ENCODE measurements at regions of chr17 and their contacts with region 1.

Region 1: GRCh38 chr17:38799378-38800236 is at the start of gene PIP4K2B:
- DNase-seq: peak; percentile 92 to 97
- ATAC-seq: peak; percentile 91 to 92
- H3K4me3 ChIP-seq: peak within 1 kb of the TSS; percentile 83 to 96 (median 88)
- H3K27ac ChIP-seq: peak within 1 kb of the TSS; percentile 94 to 100 (median 100)
- H3K4me1 ChIP-seq: peaks cover 34 to 37% of the 10 kb centered on the region in 2 donors
- H3K27me3 ChIP-seq: no peaks in the 10 kb centered on the region
- CTCF ChIP-seq: no peak
- POLR2A ChIP-seq: peak; percentile 47 to 51
- total RNA-seq, gene PIP4K2B: 57.2 to 97.0 (median 76.8) TPM

Region 2: DNA sequence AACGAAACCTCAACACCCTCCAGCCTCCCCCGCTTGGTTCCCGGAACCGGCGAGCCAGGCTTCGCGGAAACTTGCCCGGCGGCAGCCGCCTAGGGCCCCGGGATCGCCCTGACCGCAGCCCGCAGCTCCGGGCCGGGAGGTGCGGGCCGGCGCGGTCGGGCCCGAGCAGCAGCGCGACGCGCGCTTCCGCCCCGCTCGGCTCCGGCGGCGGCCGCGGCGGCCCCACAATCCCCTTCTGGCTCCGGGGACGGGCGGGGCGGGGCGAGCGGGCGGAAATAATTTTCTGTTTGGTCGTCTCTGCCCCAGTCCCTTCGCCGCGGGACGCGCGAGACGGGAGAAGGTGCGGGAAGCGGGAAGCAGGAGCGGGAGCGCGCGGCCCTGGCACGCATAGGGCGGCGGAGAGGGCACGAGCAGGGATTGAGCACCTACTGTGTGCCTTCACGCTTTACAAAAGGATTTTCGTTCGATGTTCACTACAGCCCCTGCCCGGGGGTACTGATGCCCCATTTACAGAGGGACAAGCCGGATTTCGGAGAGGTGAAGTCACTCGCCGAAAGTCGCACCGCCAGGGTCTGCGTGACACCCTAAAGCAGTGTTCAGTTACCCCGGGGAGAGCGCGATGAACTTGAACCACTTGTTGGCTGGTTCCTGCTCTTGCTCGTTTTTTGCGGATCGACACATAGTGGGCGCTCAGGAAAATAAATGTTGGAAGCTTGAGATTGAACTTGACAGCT is 97.3 kb before region 1 on chr17:
- in situ Hi-C with region 1: no loop called
- intact Hi-C with region 1: loop called (anchors 5 kb)
- DNase-seq: peak; percentile 82 to 88
- ATAC-seq: peak; percentile 47 to 50
- H3K4me3 ChIP-seq: peak overlapping the region; percentile 71 to 93 (median 78)
- H3K27ac ChIP-seq: peak overlapping the region; percentile 96 to 100 (median 98)
- H3K4me1 ChIP-seq: peaks cover 20 to 25% of the 10 kb centered on the region in 2 donors
- H3K27me3 ChIP-seq: no peaks in the 10 kb centered on the region
- CTCF ChIP-seq: no peak
- POLR2A ChIP-seq: peak; percentile 96 to 97

Region 3: GRCh38 chr17:38824899-38825761 is 25.5 kb after region 1 on chr17 and contains the start of gene CWC25:
- in situ Hi-C with region 1: no loop called
- intact Hi-C with region 1: loop called (anchors 1 kb)
- DNase-seq: peak; percentile 79 to 96
- ATAC-seq: peak; percentile 96 to 97
- H3K4me3 ChIP-seq: peak within 1 kb of the TSS; percentile 69 to 100 (median 90)
- H3K27ac ChIP-seq: peak within 1 kb of the TSS; percentile 96 to 99 (median 98)
- H3K4me1 ChIP-seq: peaks cover 18 to 21% of the 10 kb centered on the region in 2 donors
- H3K27me3 ChIP-seq: no peaks in the 10 kb centered on the region
- CTCF ChIP-seq: no peak
- POLR2A ChIP-seq: peak; percentile 71 to 85
- total RNA-seq, gene CWC25: 9.1 to 14.4 (median 12.3) TPM

Region 4: DNA sequence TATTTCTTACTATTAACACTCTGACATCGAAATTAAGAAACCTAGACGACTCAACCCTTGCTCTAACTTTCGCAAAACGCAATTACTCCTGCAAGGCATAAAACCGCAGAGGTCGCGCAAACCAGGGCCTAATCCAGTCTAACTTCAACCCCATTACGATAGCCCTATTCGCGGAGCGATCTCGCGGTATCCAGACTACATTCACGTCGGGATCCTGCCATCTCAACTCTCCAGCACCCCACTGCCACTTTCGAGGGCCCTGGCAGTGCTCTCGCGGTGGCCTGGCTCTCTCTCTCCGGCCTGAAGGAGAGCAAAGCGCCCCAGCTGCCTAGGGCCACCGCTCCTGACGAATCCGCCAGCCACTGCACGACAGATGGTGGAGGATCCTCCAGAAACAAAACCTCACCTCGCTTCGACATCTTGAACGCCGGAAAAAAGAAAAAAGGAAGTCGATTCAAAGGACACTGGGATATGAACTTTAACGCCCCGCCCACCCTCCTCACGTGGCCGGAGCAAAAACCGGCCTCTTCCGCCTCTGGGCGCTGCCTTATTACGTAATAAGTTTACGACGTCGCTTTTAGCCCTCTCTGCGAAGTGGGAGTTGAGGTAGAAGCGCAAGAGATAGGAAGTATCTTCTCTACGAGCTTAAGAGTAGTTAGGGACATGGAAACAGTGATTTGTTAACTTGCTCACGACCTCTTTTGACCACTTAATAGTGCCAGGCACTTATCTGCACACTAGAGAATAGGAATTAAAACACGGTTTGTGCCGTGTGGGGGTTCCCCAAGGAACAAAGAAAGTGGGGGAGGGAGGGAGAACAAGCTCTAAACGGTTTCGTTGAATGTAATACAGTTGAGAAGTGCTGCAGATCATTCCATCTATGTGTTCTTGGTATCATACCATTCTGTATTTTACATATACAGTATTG is 53.9 kb after region 1 on chr17 and contains the start of gene RPL23:
- in situ Hi-C with region 1: no loop called
- intact Hi-C with region 1: loop called (anchors 1 kb)
- DNase-seq: peak; percentile 94 to 95
- ATAC-seq: peak; percentile 97 to 99
- H3K4me3 ChIP-seq: peak within 1 kb of the TSS; percentile 69 to 74 (median 70)
- H3K27ac ChIP-seq: peak within 1 kb of the TSS; percentile 85 to 96 (median 92)
- H3K4me1 ChIP-seq: peaks cover 23 to 28% of the 10 kb centered on the region in 2 donors
- H3K27me3 ChIP-seq: no peaks in the 10 kb centered on the region
- CTCF ChIP-seq: peak in 1 of 5 experiments; percentile 19
- POLR2A ChIP-seq: peak; percentile 82 to 83
- total RNA-seq, gene RPL23: 878 to 1,126 (median 955) TPM